Keratinocyte (primary cell): ENCODE measurements at regions of chr6 and their contacts with region 1.

Region 1: DNA sequence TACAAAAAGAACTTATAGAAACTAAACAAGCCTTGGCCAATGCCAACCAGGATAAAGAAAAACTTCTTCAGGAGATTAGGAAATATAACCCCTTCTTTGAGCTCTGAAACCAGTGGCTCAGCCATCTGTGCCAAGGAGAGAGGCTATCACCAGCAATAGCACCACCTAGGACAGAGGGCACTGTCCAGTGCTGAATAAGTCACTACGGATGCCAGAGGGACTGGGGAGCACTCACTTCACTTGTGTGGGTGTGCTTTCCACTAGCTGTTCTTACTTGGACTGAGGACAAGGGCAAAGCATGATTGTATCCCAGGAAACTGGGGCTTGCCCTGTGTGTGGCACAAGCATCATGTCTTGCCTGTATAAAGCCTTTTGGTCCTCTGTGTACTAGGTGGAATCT is 15.5 kb downstream of the TAF11 start:
- DNase-seq: no peak
- H3K4me3 ChIP-seq: no peak overlapping the region
- H3K27ac ChIP-seq: no peak overlapping the region
- H3K4me1 ChIP-seq: no peaks in the 10 kb centered on the region
- H3K27me3 ChIP-seq: no peaks in the 10 kb centered on the region
- CTCF ChIP-seq: no peak

Region 2: GRCh38 chr6:34771727-34772126 is 100.6 kb before region 1 on chr6:
- dilution Hi-C with region 1: loop called (anchors 10 kb)
- DNase-seq: no peak
- H3K4me3 ChIP-seq: no peak overlapping the region
- H3K27ac ChIP-seq: no peak overlapping the region
- H3K4me1 ChIP-seq: no peaks in the 10 kb centered on the region
- H3K27me3 ChIP-seq: no peaks in the 10 kb centered on the region
- CTCF ChIP-seq: no peak

Region 3: GRCh38 chr6:34922177-34922663 is 49.9 kb after region 1 on chr6:
- dilution Hi-C with region 1: no loop called
- DNase-seq: peak; percentile 49
- H3K4me3 ChIP-seq: no peak overlapping the region
- H3K27ac ChIP-seq: no peak overlapping the region
- H3K4me1 ChIP-seq: peaks cover 19% of the 10 kb centered on the region
- H3K27me3 ChIP-seq: no peaks in the 10 kb centered on the region
- CTCF ChIP-seq: no peak

Region 4: DNA sequence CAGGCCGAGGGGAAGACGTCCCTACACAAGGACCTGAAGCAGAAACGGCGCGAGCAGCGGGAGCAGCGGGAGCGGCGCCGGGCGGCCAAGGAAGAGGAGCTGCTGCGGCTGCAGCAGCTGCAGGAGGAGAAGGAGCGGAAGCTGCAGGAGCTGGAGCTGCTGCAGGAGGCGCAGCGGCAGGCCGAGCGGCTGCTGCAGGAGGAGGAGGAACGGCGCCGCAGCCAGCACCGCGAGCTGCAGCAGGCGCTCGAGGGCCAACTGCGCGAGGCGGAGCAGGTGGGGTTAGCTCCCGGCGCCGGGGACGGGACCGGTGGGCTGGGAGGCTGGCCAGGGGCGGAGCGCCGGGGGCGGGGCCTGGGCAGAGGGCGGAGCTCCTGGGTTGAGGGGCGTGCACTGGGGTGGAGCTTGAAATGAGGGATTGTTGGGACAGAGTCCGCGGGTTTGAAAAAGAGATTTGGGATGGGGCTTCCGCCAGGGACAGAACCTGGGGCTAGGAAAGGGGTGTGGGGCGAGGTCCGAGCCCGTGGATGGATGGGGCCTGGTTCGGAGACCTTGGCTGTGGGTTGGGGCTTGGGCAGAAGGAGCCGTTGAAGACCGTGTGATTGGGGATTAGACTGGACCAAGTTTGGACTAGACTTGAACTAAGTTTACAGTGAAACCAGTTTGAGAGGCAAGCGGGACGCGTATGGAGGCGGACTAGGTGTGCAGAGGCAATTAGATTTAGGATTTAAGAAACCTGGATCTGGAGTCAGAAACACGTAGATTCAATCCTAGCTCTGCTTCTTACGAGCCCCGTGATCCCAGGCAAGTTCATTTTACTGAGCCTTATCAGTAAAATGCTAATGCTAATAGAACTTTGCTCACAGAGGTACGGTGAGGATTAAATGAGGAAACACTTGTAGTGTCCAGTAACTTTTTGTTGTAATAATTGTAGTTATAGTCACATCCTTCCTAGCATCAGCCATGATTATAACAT is 446.2 kb after region 1 on chr6:
- dilution Hi-C with region 1: no loop called
- DNase-seq: peak; percentile 23
- H3K4me3 ChIP-seq: peak overlapping the region; percentile 14 to 69 (median 17)
- H3K27ac ChIP-seq: no peak overlapping the region
- H3K4me1 ChIP-seq: peaks cover 10% of the 10 kb centered on the region
- H3K27me3 ChIP-seq: no peaks in the 10 kb centered on the region
- CTCF ChIP-seq: peak in 1 of 3 experiments; percentile 15